Activated CD4-positive, alpha-beta memory T cell treated with anti-CD3 and anti-CD28 coated beads for 36 hours (primary cell): ENCODE measurements at regions of chr11 and their contacts with region 1.

Region 1: DNA sequence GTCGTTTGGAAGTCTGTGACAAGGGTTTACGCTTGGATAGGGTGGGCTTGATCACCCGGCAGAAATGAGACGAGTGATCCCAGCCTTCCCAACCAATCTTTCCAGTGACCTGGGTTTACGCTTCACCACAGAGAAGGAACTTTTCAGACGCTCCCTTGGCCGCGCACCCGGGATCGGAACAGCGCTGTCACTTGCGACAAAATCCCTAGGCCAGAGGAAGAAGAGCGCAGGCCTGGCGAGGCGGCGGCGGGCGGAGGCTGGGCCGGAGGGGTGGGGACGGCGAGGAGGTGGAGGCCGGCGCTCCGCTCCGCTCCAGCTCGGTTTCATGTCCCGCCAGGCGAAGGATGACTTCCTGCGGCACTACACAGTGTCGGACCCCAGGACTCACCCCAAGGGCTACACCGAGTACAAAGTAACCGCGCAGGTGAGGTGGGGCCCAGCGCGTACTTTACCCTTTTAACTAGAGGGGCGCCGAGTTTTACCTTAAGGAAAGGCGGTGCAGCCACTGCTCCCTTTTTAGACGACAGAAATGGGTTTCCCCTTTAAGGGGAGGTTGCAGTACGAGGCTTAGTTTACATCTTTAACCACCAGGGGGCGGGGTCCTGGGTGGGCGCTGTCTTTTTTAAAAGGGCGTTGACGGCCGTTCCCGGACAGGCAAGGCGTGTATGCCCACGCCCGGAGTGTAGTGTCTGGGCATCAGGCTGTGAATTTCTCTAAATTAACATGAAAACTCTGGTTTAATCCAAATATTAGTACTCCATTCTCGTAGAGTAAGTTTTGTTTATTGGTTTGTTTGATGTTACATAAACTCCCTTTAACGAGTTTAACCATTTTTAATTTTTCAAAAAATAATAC is at the start of gene SNX15:
- DNase-seq: peak; percentile 95
- H3K4me3 Mint-ChIP-seq: peak within 1 kb of the TSS; percentile 65
- H3K27ac Mint-ChIP-seq: peak within 1 kb of the TSS; percentile 86
- H3K4me1 Mint-ChIP-seq: peaks cover 14% of the 10 kb centered on the region
- H3K27me3 Mint-ChIP-seq: no peaks in the 10 kb centered on the region
- total RNA-seq, gene SNX15: 15.4 to 15.9 TPM

Region 2: GRCh38 chr11:64846998-64847666 is 180.3 kb before region 1 on chr11:
- CTCF ChIA-PET with region 1: no interaction called
- POLR2A ChIA-PET with region 1: no interaction called
- intact Hi-C with region 1: loop called (anchors 5 kb)
- DNase-seq: peak; percentile 94
- H3K4me3 Mint-ChIP-seq: no peak overlapping the region
- H3K27ac Mint-ChIP-seq: peak overlapping the region; percentile 18
- H3K4me1 Mint-ChIP-seq: peaks cover 48% of the 10 kb centered on the region
- H3K27me3 Mint-ChIP-seq: no peaks in the 10 kb centered on the region

Region 3: DNA sequence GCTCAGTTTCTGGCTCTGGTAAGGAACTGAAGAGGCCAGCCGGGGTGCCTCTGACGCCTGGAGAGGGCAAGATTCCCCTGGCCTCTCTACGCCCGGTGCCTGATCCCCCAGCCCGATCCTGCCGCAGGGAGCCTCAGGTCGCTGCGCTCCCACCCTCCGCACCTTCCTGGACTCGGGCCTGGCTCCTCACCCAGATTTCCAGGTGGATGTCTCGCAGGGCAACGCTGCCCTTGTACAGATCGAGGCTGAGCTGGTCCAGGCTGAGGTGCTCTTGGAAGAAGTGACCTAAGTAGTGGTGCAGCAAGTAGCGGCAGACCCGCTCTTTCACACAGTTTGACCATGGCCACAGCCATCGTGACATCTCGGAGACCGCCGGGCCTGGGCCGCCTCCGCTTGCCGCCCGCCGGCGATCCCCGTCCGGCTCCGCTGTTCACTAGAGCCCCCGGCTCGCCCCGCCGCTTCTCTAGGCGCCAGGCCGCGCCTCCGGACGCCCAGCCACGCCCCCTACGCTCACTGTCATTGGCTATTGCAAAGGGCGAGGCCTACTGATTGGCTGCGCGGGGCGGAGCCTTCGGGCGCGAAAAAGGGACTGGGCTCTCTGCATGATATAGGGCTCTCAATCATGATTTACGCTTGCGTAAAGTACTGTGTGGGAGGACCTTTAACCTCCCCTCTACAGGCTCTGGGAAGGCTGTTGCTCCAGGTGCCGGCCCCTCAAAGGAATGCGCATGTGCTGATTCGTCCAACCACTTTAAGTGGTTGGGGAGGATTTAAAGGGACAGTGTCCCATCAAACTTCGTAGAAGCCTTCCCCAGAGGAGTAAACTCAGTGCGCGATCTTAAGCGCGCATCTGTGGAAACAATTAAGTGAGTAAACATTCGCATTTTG is 110.4 kb before region 1 on chr11 and contains the start of gene ATG2A:
- CTCF ChIA-PET with region 1: no interaction called
- POLR2A ChIA-PET with region 1: no interaction called
- intact Hi-C with region 1: loop called (anchors 1 kb)
- DNase-seq: peak; percentile 99
- H3K4me3 Mint-ChIP-seq: peak within 1 kb of the TSS; percentile 94
- H3K27ac Mint-ChIP-seq: peak within 1 kb of the TSS; percentile 86
- H3K4me1 Mint-ChIP-seq: peaks cover 26% of the 10 kb centered on the region
- H3K27me3 Mint-ChIP-seq: no peaks in the 10 kb centered on the region
- total RNA-seq, gene ATG2A: 20.2 to 20.5 TPM

Region 4: DNA sequence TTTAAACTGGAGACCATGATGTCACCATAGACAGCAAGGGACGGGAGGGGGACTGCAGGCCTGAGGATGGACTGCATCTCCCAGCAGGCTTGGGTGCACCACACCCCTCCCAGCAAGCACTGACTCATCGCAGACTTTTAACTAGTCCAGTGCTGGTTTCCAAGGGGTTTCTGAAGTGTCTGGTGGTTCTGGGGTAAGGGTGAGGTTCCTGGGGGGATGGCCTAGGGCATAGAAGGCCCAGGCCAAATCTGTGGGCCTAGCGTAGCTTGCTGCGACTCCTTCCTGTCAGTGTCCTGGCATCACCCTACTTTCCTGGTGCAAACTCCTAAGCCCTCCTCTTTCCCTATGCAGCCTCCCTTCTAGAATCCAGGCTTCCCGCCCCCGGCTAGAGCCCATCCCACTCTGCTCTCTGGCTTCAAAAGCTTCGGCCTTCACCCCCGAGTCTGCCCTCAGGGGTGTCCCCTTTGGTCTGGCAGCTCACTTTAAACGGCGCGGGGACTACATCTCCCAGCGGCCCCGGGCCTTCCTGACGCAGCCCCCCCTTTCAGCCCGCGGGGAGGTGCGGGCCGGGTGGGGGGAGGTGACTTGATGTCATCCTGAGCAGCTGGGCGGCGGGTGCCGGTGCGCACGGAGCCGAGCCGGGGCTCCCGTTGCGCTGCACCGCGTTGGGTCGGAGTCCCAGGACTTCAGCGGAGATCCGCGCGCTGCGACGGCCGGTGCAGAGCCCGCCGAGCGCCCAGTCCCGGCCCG is 103.2 kb before region 1 on chr11 and contains the start of gene PPP2R5B:
- CTCF ChIA-PET with region 1: no interaction called
- POLR2A ChIA-PET with region 1: no interaction called
- intact Hi-C with region 1: loop called (anchors 1 kb)
- DNase-seq: peak; percentile 93
- H3K4me3 Mint-ChIP-seq: peak within 1 kb of the TSS; percentile 85
- H3K27ac Mint-ChIP-seq: peak within 1 kb of the TSS; percentile 90
- H3K4me1 Mint-ChIP-seq: peaks cover 15% of the 10 kb centered on the region
- H3K27me3 Mint-ChIP-seq: no peaks in the 10 kb centered on the region
- total RNA-seq, gene PPP2R5B: 9.7 to 11.9 TPM

Region 5: GRCh38 chr11:65040847-65041621 is 13.6 kb after region 1 on chr11 and contains the start of gene SAC3D1:
- CTCF ChIA-PET with region 1: interaction called, 6 read pairs
- POLR2A ChIA-PET with region 1: no interaction called
- intact Hi-C with region 1: loop called (anchors 1 kb)
- DNase-seq: peak; percentile 94
- H3K4me3 Mint-ChIP-seq: peak within 1 kb of the TSS; percentile 87
- H3K27ac Mint-ChIP-seq: peak within 1 kb of the TSS; percentile 97
- H3K4me1 Mint-ChIP-seq: peaks cover 7% of the 10 kb centered on the region
- H3K27me3 Mint-ChIP-seq: no peaks in the 10 kb centered on the region
- total RNA-seq, gene SAC3D1: 14.2 to 14.7 TPM

Region 6: DNA sequence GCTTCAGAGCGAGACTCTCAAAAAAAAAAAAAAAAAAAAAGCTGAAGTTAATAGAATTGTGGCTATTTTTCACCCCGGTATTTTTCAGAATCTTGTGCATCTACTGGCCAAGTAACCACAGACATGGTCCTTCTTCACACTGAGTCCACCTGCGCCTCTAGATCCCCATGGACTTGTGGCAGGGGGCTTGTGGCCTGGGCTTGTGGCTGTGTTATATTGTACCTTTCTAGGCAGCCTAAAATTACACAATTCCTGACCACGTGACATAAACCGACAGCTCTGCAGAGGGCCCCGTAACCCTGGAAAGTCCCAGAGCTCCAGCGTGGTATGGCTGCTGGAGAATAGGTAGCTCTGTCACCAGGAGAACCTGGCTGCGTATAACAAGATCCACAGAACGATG is 41.8 kb after region 1 on chr11:
- CTCF ChIA-PET with region 1: no interaction called
- POLR2A ChIA-PET with region 1: no interaction called
- intact Hi-C with region 1: no loop called
- DNase-seq: no peak
- H3K4me3 Mint-ChIP-seq: no peak overlapping the region
- H3K27ac Mint-ChIP-seq: no peak overlapping the region
- H3K4me1 Mint-ChIP-seq: no peaks in the 10 kb centered on the region
- H3K27me3 Mint-ChIP-seq: no peaks in the 10 kb centered on the region

Region 7: GRCh38 chr11:65083834-65084597 is 56.6 kb after region 1 on chr11 and contains the starts of genes CDCA5 and ZFPL1:
- CTCF ChIA-PET with region 1: no interaction called
- POLR2A ChIA-PET with region 1: no interaction called
- intact Hi-C with region 1: loop called (anchors 5 kb)
- DNase-seq: peak; percentile 97
- H3K4me3 Mint-ChIP-seq: peak within 1 kb of the TSS; percentile 99
- H3K27ac Mint-ChIP-seq: peak within 1 kb of the TSS; percentile 96
- H3K4me1 Mint-ChIP-seq: peaks cover 36% of the 10 kb centered on the region
- H3K27me3 Mint-ChIP-seq: no peaks in the 10 kb centered on the region
- total RNA-seq, gene CDCA5: 111 to 112 TPM
- total RNA-seq, gene ZFPL1: 28.3 to 31.3 TPM